ENCODE measurements at regions of chr6 and their contacts with region 1.

Region 1: GRCh38 chr6:37353761-37354525 is at the start of gene RNF8:
- DNase-seq: peak; percentile 84 to 87 (median 86)
- H3K4me3 ChIP-seq: peak within 1 kb of the TSS; percentile 71 to 96
- H3K4me3 Mint-ChIP-seq: peak within 1 kb of the TSS; percentile 92 to 98 (median 96)
- H3K27ac ChIP-seq: peak within 1 kb of the TSS; percentile 65
- H3K27ac Mint-ChIP-seq: peak within 1 kb of the TSS; percentile 80 to 96 (median 93)
- H3K4me1 ChIP-seq: peaks cover 30% of the 10 kb centered on the region
- H3K4me1 Mint-ChIP-seq: peaks cover 26 to 38% (median 31%) of the 10 kb centered on the region in 4 donors
- H3K27me3 ChIP-seq: no peaks in the 10 kb centered on the region
- H3K27me3 Mint-ChIP-seq: no peaks in the 10 kb centered on the region
- total RNA-seq, gene RNF8: 14.8 to 16.6 TPM

Region 2: GRCh38 chr6:36888654-36889481 is 465.1 kb before region 1 on chr6:
- CTCF ChIA-PET with region 1: no interaction called
- POLR2A ChIA-PET with region 1: no interaction called
- intact Hi-C with region 1: no loop called
- DNase-seq: no peak
- H3K4me3 ChIP-seq: no peak overlapping the region
- H3K4me3 Mint-ChIP-seq: peak overlapping the region in 4 of 8 donors; percentile 3 to 13 (median 8)
- H3K27ac ChIP-seq: no peak overlapping the region
- H3K27ac Mint-ChIP-seq: peak overlapping the region; percentile 2 to 77 (median 25)
- H3K4me1 ChIP-seq: peaks cover 50% of the 10 kb centered on the region
- H3K4me1 Mint-ChIP-seq: peaks cover 29 to 51% (median 41%) of the 10 kb centered on the region in 4 donors
- H3K27me3 ChIP-seq: no peaks in the 10 kb centered on the region
- H3K27me3 Mint-ChIP-seq: no peaks in the 10 kb centered on the region

Region 3: GRCh38 chr6:37432916-37433656 is 79.1 kb after region 1 on chr6 and contains the start of gene CMTR1:
- CTCF ChIA-PET with region 1: no interaction called
- POLR2A ChIA-PET with region 1: interaction called, 3 read pairs
- intact Hi-C with region 1: loop called (anchors 2 kb)
- DNase-seq: peak; percentile 97 to 98 (median 97)
- H3K4me3 ChIP-seq: peak within 1 kb of the TSS; percentile 61 to 95
- H3K4me3 Mint-ChIP-seq: peak within 1 kb of the TSS; percentile 92 to 98 (median 93)
- H3K27ac ChIP-seq: peak within 1 kb of the TSS; percentile 96
- H3K27ac Mint-ChIP-seq: peak within 1 kb of the TSS; percentile 95 to 100 (median 97)
- H3K4me1 ChIP-seq: peaks cover 32% of the 10 kb centered on the region
- H3K4me1 Mint-ChIP-seq: peaks cover 24 to 52% (median 40%) of the 10 kb centered on the region in 4 donors
- H3K27me3 ChIP-seq: no peaks in the 10 kb centered on the region
- H3K27me3 Mint-ChIP-seq: peaks cover 3 to 5% of the 10 kb centered on the region in 2 donors
- total RNA-seq, gene CMTR1: 75.0 to 79.1 TPM

Measured in CD4-positive, alpha-beta memory T cell (primary cell).